IMR-90 (cell line): ENCODE measurements at regions of chr15 and their contacts with region 1.

Region 1: GRCh38 chr15:25775317-25775912 is 87.7 kb downstream of the ATP10A start:
- DNase-seq: peak; percentile 82
- ATAC-seq: peak; percentile 83
- H3K4me3 ChIP-seq: no peak overlapping the region
- H3K27ac ChIP-seq: peak overlapping the region; percentile 0; the same call in 1 of the 2 replicates
- H3K4me1 ChIP-seq: peaks cover 9% of the 10 kb centered on the region
- H3K27me3 ChIP-seq: no peaks in the 10 kb centered on the region
- CTCF ChIP-seq: no peak
- POLR2A ChIP-seq: 0 out of 2 replicates have a peak, but pooled peaks have one; percentile 6
- RAD21 ChIP-seq: no peak

Region 2: DNA sequence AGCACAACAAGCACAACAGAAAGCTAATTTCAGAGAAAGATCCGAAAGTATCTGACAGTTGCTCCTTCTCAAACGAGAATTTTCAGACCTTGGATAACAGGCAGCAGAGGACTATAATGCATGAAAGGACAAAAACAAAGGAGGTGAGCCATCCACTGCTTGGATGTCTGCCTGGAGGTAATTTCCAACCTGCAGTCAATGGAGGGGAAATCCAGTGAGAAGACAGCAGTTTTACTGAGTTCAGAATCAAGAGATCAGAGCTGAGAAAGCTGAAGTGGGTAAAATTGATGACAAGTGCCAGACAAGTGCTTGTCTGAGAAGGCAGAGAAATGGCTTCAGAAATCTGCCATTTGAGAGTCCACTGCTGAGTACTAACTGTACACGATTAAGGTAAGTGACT is 358.7 kb before region 1 on chr15:
- CTCF ChIA-PET with region 1: no interaction called
- POLR2A ChIA-PET with region 1: no interaction called
- dilution Hi-C with region 1: no loop called
- in situ Hi-C with region 1: no loop called
- intact Hi-C with region 1: no loop called
- DNase-seq: peak; percentile 24
- ATAC-seq: no peak
- H3K4me3 ChIP-seq: no peak overlapping the region
- H3K27ac ChIP-seq: no peak overlapping the region
- H3K4me1 ChIP-seq: peaks cover 2% of the 10 kb centered on the region; the same call in 1 of the 2 replicates
- H3K27me3 ChIP-seq: no peaks in the 10 kb centered on the region
- CTCF ChIP-seq: no peak
- POLR2A ChIP-seq: no peak
- RAD21 ChIP-seq: no peak

Region 3: DNA sequence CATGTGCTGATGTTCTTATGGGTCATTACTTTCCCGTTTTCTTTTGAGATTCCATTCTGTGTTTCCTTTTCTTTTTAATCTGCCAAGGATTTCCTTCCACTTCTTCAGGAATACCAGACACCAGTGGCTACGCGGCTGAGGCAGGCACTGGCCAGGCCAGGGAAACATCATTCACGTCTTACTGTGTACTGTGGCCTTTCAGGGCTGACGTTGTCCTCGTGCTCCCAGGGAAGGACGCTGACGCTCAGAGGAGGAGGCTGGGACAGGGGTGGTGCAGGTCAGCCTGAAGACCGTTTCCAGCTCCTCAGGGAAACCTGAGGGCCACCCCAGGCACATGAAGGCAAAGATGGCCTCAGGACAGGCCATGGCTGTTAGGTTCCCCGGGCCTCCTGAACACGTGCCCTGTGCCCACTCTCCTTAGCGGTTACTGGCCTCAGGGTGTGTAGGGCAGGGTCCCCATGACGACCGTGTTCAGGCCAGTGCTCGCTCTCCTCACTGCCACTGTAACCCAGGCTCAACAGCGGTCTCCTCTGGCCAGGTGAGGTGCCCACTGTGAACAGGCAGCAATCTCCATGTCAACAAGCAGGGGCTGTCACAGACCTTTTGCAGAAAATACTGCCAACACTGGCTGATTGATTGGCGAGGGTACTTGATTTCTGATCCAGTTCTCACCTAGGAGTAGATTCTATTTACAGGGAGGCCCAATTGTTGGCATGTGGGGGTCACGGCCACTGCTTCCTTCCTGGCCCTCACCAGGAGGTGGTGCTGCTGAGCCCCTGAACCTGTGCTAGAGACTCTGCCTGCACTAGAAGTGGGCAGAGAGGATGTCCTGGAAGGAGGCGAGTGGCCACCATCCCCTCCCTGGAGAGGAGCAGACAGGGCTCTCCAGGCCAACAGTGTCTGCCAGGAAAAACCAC is 81.8 kb before region 1 on chr15:
- CTCF ChIA-PET with region 1: no interaction called
- POLR2A ChIA-PET with region 1: no interaction called
- dilution Hi-C with region 1: no loop called
- in situ Hi-C with region 1: no loop called
- intact Hi-C with region 1: loop called (anchors 10 kb)
- DNase-seq: peak; percentile 24
- ATAC-seq: peak; percentile 90
- H3K4me3 ChIP-seq: no peak overlapping the region
- H3K27ac ChIP-seq: no peak overlapping the region
- H3K4me1 ChIP-seq: peaks cover 4% of the 10 kb centered on the region
- H3K27me3 ChIP-seq: no peaks in the 10 kb centered on the region
- CTCF ChIP-seq: peak; percentile 62
- POLR2A ChIP-seq: no peak
- RAD21 ChIP-seq: peak; percentile 70

Region 4: GRCh38 chr15:25739687-25740121 is 35.7 kb before region 1 on chr15:
- CTCF ChIA-PET with region 1: no interaction called
- POLR2A ChIA-PET with region 1: no interaction called
- dilution Hi-C with region 1: no loop called
- in situ Hi-C with region 1: no loop called
- intact Hi-C with region 1: loop called (anchors 5 kb)
- DNase-seq: peak; percentile 64
- ATAC-seq: peak; percentile 72
- H3K4me3 ChIP-seq: no peak overlapping the region
- H3K27ac ChIP-seq: no peak overlapping the region
- H3K4me1 ChIP-seq: peaks cover 13% of the 10 kb centered on the region
- H3K27me3 ChIP-seq: no peaks in the 10 kb centered on the region
- CTCF ChIP-seq: peak; percentile 63
- POLR2A ChIP-seq: no peak
- RAD21 ChIP-seq: peak; percentile 70

Region 5: DNA sequence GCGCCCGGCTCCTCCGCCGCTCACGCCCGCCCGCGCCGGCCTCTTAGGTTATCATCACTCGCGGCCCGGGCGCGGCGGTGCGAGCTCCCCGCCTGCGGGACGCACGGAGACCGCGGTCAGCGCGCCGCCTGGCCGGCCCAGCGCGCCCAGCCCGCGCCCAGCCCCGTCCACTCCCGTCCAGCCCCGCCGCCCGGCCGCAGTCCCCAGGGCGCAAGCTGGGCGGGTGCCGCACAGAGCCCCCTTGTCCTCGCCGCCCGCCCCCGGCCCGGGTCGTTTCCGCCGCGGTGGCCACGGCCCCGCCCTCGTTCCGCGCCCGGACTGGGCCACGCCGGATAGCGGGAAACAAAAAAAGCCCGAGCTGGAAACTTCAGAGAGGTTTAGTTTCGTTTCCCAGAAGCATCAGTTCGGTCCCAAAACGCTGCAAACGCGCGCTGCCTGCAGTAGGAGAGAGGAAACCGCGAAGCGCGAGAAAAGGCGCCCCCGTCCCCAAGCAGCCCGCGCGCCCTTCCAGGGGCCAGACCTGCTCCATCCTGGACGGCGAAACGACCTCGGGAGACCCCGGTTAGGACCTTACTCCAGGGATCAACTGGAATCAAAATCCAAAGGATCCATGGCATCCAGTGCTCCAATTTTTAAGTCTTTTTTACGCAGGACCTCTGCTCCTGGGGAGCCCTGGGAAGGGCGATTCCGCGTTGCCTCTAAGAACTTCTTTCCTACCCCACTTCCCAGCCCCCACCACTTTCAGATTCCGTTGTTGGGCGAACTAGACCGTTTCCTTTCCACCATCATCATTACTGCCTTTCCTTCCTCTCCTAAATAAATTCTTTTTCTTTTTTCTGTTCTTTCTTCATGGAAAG is 87.9 kb after region 1 on chr15 and contains the start of gene ATP10A:
- CTCF ChIA-PET with region 1: no interaction called
- POLR2A ChIA-PET with region 1: no interaction called
- dilution Hi-C with region 1: no loop called
- in situ Hi-C with region 1: no loop called
- intact Hi-C with region 1: loop called (anchors 5 kb)
- DNase-seq: peak; percentile 71
- ATAC-seq: peak; percentile 63
- H3K4me3 ChIP-seq: peak within 1 kb of the TSS; percentile 84
- H3K27ac ChIP-seq: peak within 1 kb of the TSS; percentile 63
- H3K4me1 ChIP-seq: peaks cover 22% of the 10 kb centered on the region
- H3K27me3 ChIP-seq: no peaks in the 10 kb centered on the region
- CTCF ChIP-seq: no peak
- POLR2A ChIP-seq: no peak
- RAD21 ChIP-seq: peak; percentile 2; the same call in 1 of the 2 replicates
- total RNA-seq, gene ATP10A: 12.8 and 13.8 TPM in 2 replicates

Region 6: DNA sequence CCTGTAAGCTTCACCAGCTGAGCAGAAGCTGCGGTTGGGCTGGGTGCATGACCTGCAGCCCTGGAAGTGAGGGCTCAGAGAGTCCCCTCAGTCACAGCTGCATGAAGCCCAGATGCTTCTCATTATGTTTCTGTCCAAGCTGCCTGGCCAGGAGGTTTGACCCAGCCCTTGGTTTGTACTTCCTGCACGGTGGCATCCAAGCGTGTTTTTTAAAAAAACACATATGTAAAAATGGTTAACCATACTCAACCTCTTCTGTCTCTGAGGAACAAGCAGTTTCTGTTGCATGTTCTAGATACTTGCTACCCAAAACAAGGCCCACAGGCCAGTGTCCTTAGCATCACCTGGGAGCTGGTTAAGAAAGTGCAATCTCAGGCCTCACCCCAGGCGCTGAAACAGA is 163.7 kb after region 1 on chr15:
- CTCF ChIA-PET with region 1: no interaction called
- POLR2A ChIA-PET with region 1: no interaction called
- dilution Hi-C with region 1: no loop called
- in situ Hi-C with region 1: no loop called
- intact Hi-C with region 1: no loop called
- DNase-seq: no peak
- ATAC-seq: no peak
- H3K4me3 ChIP-seq: no peak overlapping the region
- H3K27ac ChIP-seq: no peak overlapping the region
- H3K4me1 ChIP-seq: no peaks in the 10 kb centered on the region
- H3K27me3 ChIP-seq: peaks cover 5% of the 10 kb centered on the region
- CTCF ChIP-seq: no peak
- POLR2A ChIP-seq: no peak
- RAD21 ChIP-seq: no peak

Region 7: DNA sequence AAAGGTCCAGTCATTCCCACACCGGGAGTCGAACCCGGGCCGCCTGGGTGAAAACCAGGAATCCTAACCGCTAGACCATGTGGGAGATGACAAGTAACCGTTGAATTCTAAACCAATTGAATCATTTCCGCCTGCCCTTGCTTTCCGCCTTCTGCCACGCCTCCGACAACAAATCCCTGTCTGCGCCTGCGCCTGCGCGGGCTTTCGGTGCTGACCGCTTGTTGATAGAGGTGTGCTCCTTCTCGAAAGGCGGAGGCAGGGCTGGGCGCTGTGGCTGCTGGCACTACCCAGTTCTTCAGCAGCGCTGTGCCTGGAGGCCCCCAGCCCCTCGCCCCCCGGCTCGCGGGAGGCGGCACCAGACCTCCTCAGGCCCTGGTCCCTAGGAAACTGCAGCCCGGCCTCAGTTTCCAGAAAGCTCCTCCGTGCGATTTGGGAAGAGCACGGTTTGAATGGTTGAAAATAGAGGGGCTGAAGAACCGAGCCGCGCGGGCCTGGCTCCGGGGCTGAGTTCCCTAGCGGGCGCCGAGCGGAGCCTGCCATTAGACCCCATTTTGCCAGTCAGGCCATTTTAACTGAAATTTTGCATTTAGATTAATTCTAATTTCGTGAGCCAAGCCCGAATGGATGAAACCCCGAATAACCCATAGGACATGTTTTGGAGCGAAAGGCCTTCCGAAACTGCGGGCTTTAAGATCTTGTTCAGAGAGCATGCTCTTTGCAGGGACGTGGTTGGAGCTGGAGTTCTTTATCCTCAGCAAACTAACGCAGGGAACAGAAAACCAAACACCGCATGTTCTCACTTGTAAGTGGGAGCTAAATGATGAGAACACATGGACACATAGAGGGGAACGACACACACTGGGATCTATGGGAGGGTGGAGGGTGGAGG is 307.1 kb after region 1 on chr15:
- CTCF ChIA-PET with region 1: no interaction called
- POLR2A ChIA-PET with region 1: no interaction called
- dilution Hi-C with region 1: no loop called
- in situ Hi-C with region 1: no loop called
- intact Hi-C with region 1: loop called (anchors 10 kb)
- DNase-seq: peak; percentile 93
- ATAC-seq: peak; percentile 96
- H3K4me3 ChIP-seq: peak overlapping the region; percentile 63
- H3K27ac ChIP-seq: peak overlapping the region; percentile 62
- H3K4me1 ChIP-seq: peaks cover 6% of the 10 kb centered on the region
- H3K27me3 ChIP-seq: no peaks in the 10 kb centered on the region
- CTCF ChIP-seq: no peak
- POLR2A ChIP-seq: no peak
- RAD21 ChIP-seq: no peak